ENCODE measurements at regions of chr9 and their contacts with region 1.

Region 1: GRCh38 chr9:96449845-96450612 is at the start of gene HABP4:
- DNase-seq: peak; percentile 93 to 94 (median 94)
- H3K4me3 ChIP-seq: peak within 1 kb of the TSS; percentile 48 to 72
- H3K4me3 Mint-ChIP-seq: peak within 1 kb of the TSS; percentile 91 to 96 (median 96)
- H3K27ac ChIP-seq: peak within 1 kb of the TSS; percentile 59
- H3K27ac Mint-ChIP-seq: peak within 1 kb of the TSS; percentile 82 to 98 (median 94)
- H3K4me1 ChIP-seq: peaks cover 23% of the 10 kb centered on the region
- H3K4me1 Mint-ChIP-seq: peaks cover 16 to 32% (median 21%) of the 10 kb centered on the region in 4 donors
- H3K27me3 ChIP-seq: no peaks in the 10 kb centered on the region
- H3K27me3 Mint-ChIP-seq: no peaks in the 10 kb centered on the region
- total RNA-seq, gene HABP4: 35.5 to 36.6 TPM

Region 2: GRCh38 chr9:96327694-96328352 is 122.2 kb before region 1 on chr9:
- CTCF ChIA-PET with region 1: interaction called, 36 read pairs
- POLR2A ChIA-PET with region 1: interaction called, 3 read pairs
- intact Hi-C with region 1: loop called (anchors 2 kb)
- DNase-seq: peak; percentile 46 to 66 (median 54)
- H3K4me3 ChIP-seq: no peak overlapping the region
- H3K4me3 Mint-ChIP-seq: no peak overlapping the region
- H3K27ac ChIP-seq: no peak overlapping the region
- H3K27ac Mint-ChIP-seq: peak overlapping the region in 1 of 7 donors; percentile 29
- H3K4me1 ChIP-seq: no peaks in the 10 kb centered on the region
- H3K4me1 Mint-ChIP-seq: no peaks in the 10 kb centered on the region
- H3K27me3 ChIP-seq: no peaks in the 10 kb centered on the region
- H3K27me3 Mint-ChIP-seq: no peaks in the 10 kb centered on the region

Region 3: DNA sequence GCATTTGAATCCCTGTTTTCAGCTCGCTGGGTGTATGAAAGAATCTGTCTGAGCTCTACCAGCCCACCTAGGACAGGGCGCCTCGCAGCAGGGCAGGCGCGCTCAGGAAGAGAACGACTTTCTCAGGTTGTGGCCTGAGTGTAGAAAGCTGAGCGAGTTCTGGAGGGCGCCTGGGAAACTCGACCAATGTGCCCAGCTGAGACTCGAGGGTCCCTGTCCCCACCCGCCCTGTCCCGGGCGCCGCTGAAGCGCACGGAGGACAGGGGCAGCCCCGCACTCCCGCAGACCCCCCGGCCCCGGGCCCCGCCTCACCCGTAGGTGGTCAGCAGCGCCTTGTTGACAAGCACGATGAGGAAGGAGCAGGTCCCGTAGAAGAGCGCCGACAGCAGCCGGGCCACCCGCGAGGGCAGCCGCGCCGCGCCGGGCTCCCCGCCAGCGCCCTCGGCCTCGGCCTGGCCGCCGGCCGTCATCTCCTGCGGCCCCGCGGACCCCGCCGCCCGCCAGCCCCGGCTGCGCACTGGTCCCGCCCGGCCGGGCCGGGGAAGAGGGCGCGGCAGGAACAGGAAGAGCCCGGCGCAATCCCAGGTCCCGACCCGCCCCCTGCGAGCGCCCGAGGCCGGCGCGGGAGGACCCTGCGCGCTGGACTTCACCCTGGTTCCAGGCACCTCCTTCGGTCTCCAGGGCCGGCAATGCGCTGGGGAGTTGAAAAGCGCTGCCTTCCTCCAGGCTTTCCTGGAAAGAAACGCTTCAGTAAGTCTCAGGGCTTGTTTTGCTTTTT is 66.7 kb before region 1 on chr9 and contains the start of gene SLC35D2:
- CTCF ChIA-PET with region 1: interaction called, 3 read pairs
- POLR2A ChIA-PET with region 1: interaction called, 29 read pairs
- intact Hi-C with region 1: loop called (anchors 1 kb)
- DNase-seq: peak in 2 of 5 donors; percentile 12 to 13
- H3K4me3 ChIP-seq: peak within 1 kb of the TSS; percentile 61 to 71
- H3K4me3 Mint-ChIP-seq: peak within 1 kb of the TSS; percentile 84 to 94 (median 90)
- H3K27ac ChIP-seq: peak within 1 kb of the TSS; percentile 65
- H3K27ac Mint-ChIP-seq: peak within 1 kb of the TSS; percentile 81 to 94 (median 87)
- H3K4me1 ChIP-seq: peaks cover 27% of the 10 kb centered on the region
- H3K4me1 Mint-ChIP-seq: peaks cover 27 to 49% (median 35%) of the 10 kb centered on the region in 4 donors
- H3K27me3 ChIP-seq: no peaks in the 10 kb centered on the region
- H3K27me3 Mint-ChIP-seq: no peaks in the 10 kb centered on the region
- total RNA-seq, gene SLC35D2: 29.8 to 30.3 TPM

Region 4: GRCh38 chr9:96398582-96399324 is 51.3 kb before region 1 on chr9:
- CTCF ChIA-PET with region 1: interaction called, 5 read pairs
- POLR2A ChIA-PET with region 1: interaction called, 35 read pairs
- intact Hi-C with region 1: no loop called
- DNase-seq: peak in 2 of 5 donors; percentile 12 to 15
- H3K4me3 ChIP-seq: no peak overlapping the region
- H3K4me3 Mint-ChIP-seq: peak overlapping the region; percentile 48 to 81 (median 56)
- H3K27ac ChIP-seq: peak overlapping the region; percentile 43
- H3K27ac Mint-ChIP-seq: peak overlapping the region; percentile 74 to 96 (median 82)
- H3K4me1 ChIP-seq: peaks cover 28% of the 10 kb centered on the region
- H3K4me1 Mint-ChIP-seq: peaks cover 20 to 27% (median 23%) of the 10 kb centered on the region in 4 donors
- H3K27me3 ChIP-seq: no peaks in the 10 kb centered on the region
- H3K27me3 Mint-ChIP-seq: no peaks in the 10 kb centered on the region

Region 5: DNA sequence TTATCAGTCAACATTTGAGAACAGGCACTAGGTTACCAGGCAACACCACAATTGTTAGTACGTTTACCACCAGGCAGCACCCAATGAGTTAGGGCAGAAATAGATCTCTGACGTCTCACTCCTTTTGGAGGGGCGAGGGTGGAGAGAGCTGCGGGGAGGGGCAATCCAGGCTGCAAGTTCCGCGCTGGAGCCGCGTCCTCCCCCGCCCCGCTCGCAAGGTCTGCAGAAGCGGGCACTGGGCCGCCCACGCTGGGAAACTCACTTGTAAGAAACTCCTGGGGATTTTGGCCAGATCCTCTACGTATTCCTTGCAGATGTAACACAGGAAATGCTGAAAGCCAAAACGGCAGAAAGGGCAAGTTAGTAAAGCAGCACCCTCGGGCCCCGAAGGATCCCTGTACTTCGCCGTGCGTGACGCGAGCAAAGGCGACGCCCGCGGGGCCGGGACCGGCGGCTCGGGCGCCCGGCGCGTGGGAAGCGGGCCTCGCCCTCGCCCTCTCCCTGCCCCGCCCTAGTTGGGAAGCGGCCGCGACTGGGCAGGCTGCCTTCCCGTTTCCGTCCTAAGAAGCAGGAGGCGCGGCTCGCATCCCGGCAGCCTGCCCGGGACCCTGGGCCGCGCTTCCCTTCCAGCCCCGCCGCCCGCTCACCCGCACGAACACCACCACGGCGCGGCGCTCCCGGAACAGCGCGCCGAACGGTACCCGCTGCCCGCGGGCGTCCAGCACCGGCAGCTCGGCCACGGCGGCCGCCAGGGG is 204.6 kb after region 1 on chr9:
- CTCF ChIA-PET with region 1: interaction called, 3 read pairs
- POLR2A ChIA-PET with region 1: interaction called, 15 read pairs
- intact Hi-C with region 1: loop called (anchors 2 kb)
- DNase-seq: peak; percentile 85 to 95 (median 91)
- H3K4me3 ChIP-seq: peak overlapping the region in 1 of 2 donors; percentile 70
- H3K4me3 Mint-ChIP-seq: peak overlapping the region; percentile 90 to 98 (median 94)
- H3K27ac ChIP-seq: peak overlapping the region; percentile 86
- H3K27ac Mint-ChIP-seq: peak overlapping the region; percentile 98 to 99 (median 99)
- H3K4me1 ChIP-seq: peaks cover 18% of the 10 kb centered on the region
- H3K4me1 Mint-ChIP-seq: peaks cover 18 to 34% (median 26%) of the 10 kb centered on the region in 4 donors
- H3K27me3 ChIP-seq: no peaks in the 10 kb centered on the region
- H3K27me3 Mint-ChIP-seq: peaks cover 0 to 2% of the 10 kb centered on the region in 2 donors

Measured in CD4-positive, alpha-beta memory T cell (primary cell).